ENCODE measurements at regions of chr12 and their contacts with region 1.

Region 1: DNA sequence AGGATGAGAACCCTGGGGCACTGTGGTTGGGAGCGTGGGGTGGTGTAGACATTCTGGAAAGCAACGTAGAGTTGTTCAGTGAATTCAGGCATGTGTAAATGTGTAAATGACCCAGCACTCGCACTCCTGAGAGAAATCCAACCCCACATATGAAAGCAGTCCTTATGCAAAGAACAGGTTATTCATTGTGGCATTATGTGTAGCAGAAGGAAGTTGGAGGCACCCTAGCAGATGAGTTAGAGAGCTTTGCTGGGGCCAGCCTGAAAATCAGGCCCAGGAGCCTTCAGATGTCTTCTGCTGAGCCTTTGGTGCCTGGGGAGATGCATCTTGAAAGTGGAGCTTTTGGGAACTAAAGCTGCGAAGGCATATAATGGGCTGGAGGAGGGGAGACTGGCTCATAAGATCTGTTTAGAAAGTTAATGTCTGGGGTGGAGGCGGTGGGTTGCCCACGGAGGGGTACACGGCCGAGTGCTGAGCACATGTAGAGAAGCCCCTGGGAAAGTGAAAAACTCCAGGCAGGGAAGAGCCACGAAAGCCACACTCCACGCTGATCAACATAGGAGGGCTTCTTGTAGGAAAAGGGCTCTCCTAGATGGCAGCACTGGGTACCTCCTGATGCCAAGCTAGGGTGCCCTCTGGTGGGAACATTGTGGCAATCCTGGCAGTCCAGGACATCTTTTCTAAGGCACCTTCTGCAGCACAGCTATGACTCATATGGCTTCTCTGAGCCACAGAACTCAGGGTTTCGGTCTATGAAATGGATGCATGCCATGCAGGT is 6.0 kb upstream of the KRT83 start:
- DNase-seq: peak; percentile 42 to 81 (median 72)
- ATAC-seq: peak; percentile 97
- H3K4me3 ChIP-seq: no peak overlapping the region
- H3K4me3 Mint-ChIP-seq: no peak overlapping the region
- H3K27ac ChIP-seq: no peak overlapping the region
- H3K27ac Mint-ChIP-seq: peak overlapping the region in 1 of 9 donors; percentile 1
- H3K4me1 ChIP-seq: peaks cover 0 to 6% of the 10 kb centered on the region in 2 donors
- H3K4me1 Mint-ChIP-seq: peaks cover 0 to 13% (median 6%) of the 10 kb centered on the region in 7 donors
- H3K27me3 ChIP-seq: no peaks in the 10 kb centered on the region
- H3K27me3 Mint-ChIP-seq: peaks cover 1 to 32% (median 19%) of the 10 kb centered on the region in 5 donors

Region 2: DNA sequence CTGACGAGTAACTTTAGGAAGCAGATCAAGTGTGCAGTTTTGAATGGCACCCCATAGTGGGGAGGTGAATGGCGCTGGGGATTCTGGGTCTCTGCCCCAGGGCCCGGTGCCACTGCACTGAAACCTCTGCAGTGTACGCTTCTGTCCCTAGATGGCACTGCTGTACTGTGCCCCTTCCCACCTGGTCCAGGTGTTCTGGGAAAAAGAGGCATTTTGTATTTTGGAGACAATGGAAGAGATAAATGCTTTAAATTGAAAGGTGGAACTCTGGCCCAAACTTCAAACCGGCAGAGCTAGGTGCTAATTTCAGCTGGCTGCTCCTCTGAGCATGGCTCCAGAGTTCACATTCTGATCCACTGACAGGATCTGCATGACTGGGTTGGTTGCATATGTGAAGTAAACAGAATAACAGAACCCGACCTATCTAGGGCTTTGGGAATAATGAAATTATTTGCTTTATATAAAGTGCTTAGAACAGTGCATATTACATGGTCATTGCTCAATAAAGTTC is 187.6 kb before region 1 on chr12:
- CTCF ChIA-PET with region 1: interaction called, 15 read pairs
- POLR2A ChIA-PET with region 1: no interaction called
- intact Hi-C with region 1: loop called in 1 of 2 experiments (anchors 1 kb)
- DNase-seq: peak in 4 of 9 donors; percentile 25 to 39 (median 34)
- ATAC-seq: peak; percentile 89
- H3K4me3 ChIP-seq: no peak overlapping the region
- H3K4me3 Mint-ChIP-seq: no peak overlapping the region
- H3K27ac ChIP-seq: no peak overlapping the region
- H3K27ac Mint-ChIP-seq: no peak overlapping the region
- H3K4me1 ChIP-seq: no peaks in the 10 kb centered on the region
- H3K4me1 Mint-ChIP-seq: peaks cover 0 to 3% (median 0%) of the 10 kb centered on the region in 7 donors
- H3K27me3 ChIP-seq: no peaks in the 10 kb centered on the region
- H3K27me3 Mint-ChIP-seq: peaks cover 0 to 16% (median 10%) of the 10 kb centered on the region in 5 donors

Region 3: DNA sequence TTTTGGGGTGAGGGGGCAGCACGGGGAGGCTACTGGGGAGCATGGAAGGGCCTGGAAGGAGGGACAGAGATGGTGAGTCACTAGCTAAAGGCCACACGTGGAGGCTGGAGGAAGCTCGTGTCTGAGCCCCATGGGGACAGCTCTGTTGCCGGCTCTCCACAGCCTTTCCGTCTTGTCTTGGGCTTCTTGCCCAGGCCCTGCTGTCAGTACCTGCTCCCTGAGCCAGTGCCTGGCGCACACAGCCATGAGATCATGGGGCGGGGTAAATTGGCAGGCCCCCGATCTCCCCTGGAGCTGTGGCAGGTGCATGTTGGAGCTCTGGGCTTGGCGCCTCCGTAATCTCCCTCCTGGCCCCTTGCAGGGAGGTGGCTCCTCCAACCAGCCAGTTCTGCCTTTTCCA is 119.3 kb before region 1 on chr12:
- CTCF ChIA-PET with region 1: no interaction called
- POLR2A ChIA-PET with region 1: no interaction called
- intact Hi-C with region 1: no loop called
- DNase-seq: no peak
- ATAC-seq: no peak
- H3K4me3 ChIP-seq: no peak overlapping the region
- H3K4me3 Mint-ChIP-seq: no peak overlapping the region
- H3K27ac ChIP-seq: no peak overlapping the region
- H3K27ac Mint-ChIP-seq: no peak overlapping the region
- H3K4me1 ChIP-seq: no peaks in the 10 kb centered on the region
- H3K4me1 Mint-ChIP-seq: peaks cover 0 to 5% (median 3%) of the 10 kb centered on the region in 7 donors
- H3K27me3 ChIP-seq: no peaks in the 10 kb centered on the region
- H3K27me3 Mint-ChIP-seq: peaks cover 4 to 27% (median 5%) of the 10 kb centered on the region in 5 donors

Region 4: DNA sequence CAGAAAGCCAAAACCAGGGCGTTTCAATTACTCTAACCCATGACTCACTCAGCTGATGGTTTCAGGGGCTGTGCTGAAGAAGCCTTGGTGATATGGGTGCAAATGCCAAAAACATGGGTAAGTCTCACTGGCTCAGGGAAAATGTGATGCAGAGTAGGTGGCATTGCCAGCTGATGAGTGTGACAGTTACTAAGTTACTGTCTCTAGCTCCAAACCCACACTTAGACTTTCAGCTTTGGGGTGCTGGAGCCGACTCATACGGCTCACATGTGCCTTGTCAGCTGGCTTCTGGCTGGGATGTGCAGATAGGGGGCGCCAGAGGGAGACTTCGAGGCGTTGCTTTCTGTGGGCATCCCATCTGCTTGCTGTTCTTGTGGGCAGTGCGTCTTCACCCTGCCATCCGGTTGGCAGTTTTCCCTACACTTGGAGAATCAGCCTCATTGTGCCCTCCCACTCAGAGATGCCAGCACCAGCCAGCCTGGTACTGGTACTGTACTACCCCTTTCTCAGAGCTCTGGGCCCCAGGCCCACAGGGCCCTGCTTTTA is 105.3 kb before region 1 on chr12:
- CTCF ChIA-PET with region 1: no interaction called
- POLR2A ChIA-PET with region 1: no interaction called
- intact Hi-C with region 1: loop called in 1 of 2 experiments (anchors 5 kb)
- DNase-seq: peak in 1 of 9 donors; percentile 75
- ATAC-seq: peak; percentile 73
- H3K4me3 ChIP-seq: no peak overlapping the region
- H3K4me3 Mint-ChIP-seq: no peak overlapping the region
- H3K27ac ChIP-seq: no peak overlapping the region
- H3K27ac Mint-ChIP-seq: no peak overlapping the region
- H3K4me1 ChIP-seq: no peaks in the 10 kb centered on the region
- H3K4me1 Mint-ChIP-seq: peaks cover 0 to 9% (median 0%) of the 10 kb centered on the region in 7 donors
- H3K27me3 ChIP-seq: peaks cover 0 to 5% of the 10 kb centered on the region in 2 donors
- H3K27me3 Mint-ChIP-seq: peaks cover 32 to 56% (median 40%) of the 10 kb centered on the region in 5 donors

Region 5: GRCh38 chr12:52351196-52352059 is 24.2 kb after region 1 on chr12:
- CTCF ChIA-PET with region 1: interaction called, 5 read pairs
- POLR2A ChIA-PET with region 1: no interaction called
- intact Hi-C with region 1: loop called in 1 of 2 experiments (anchors 1 kb)
- DNase-seq: peak in 8 of 9 donors; percentile 31 to 87 (median 74)
- ATAC-seq: peak; percentile 97
- H3K4me3 ChIP-seq: no peak overlapping the region
- H3K4me3 Mint-ChIP-seq: peak overlapping the region in 8 of 10 donors; percentile 11 to 62 (median 46)
- H3K27ac ChIP-seq: no peak overlapping the region
- H3K27ac Mint-ChIP-seq: peak overlapping the region in 7 of 9 donors; percentile 2 to 78 (median 27)
- H3K4me1 ChIP-seq: peaks cover 13 to 19% of the 10 kb centered on the region in 2 donors
- H3K4me1 Mint-ChIP-seq: peaks cover 3 to 28% (median 26%) of the 10 kb centered on the region in 7 donors
- H3K27me3 ChIP-seq: no peaks in the 10 kb centered on the region
- H3K27me3 Mint-ChIP-seq: peaks cover 0 to 22% (median 4%) of the 10 kb centered on the region in 5 donors

Measured in naive thymus-derived CD4-positive, alpha-beta T cell (primary cell).